GM18951 (cell line): ENCODE measurements at regions of chrX and their contacts with region 1.

Region 1: DNA sequence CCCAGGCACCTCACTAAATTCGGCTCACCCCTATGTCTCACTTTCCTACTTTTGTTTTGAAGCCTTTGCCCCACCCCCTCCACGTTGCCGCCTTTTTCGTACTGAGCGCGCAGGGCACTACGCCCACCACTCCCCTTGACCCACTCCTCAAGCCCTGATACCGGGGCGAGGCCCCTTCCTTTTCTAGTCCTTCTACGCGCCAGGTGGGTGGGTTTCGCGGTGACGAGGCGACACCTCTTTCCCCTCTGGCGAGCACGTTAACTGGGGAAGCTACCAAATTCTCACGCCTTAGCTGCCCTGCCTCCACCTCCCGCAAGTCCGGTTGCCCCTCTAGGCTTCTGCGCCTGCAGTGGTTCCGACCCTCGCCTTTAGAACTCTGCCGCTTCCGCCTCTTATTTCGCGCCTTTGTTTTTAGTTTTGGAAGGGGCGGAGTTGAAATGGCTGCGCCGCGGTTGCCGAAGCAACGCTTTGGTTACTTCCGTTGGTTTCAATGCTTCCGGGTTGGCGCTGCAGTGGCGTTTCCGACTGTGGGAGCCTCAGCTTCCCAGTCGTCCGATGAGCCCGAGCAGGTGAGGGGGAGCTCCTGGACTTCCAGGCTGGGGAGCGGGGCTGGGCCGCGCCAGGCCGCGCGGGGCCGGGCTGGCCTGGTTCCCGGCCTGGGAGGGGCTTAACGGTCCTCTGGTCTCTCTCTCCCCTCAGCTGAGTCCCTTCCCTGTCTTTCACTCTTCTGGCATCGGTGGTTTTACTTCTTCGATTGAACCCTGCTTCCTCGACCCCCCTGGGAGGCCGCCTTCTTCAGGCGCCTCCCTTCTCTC is at the start of gene SLC25A14:
- POLR2A ChIP-seq: peak; percentile 59

Region 2: GRCh38 chrX:130902783-130903613 is 563.4 kb after region 1 on chrX and contains the start of gene ENOX2:
- in situ Hi-C with region 1: loop called (anchors 25 kb)
- POLR2A ChIP-seq: peak; percentile 77